ENCODE measurements at regions of chr19 and their contacts with region 1.

Region 1: GRCh38 chr19:8412783-8413628 is at the start of gene MARCHF2:
- DNase-seq: peak; percentile 98
- ATAC-seq: peak; percentile 99 to 100
- total RNA-seq, gene MARCHF2: 81.1 to 87.8 TPM

Region 2: DNA sequence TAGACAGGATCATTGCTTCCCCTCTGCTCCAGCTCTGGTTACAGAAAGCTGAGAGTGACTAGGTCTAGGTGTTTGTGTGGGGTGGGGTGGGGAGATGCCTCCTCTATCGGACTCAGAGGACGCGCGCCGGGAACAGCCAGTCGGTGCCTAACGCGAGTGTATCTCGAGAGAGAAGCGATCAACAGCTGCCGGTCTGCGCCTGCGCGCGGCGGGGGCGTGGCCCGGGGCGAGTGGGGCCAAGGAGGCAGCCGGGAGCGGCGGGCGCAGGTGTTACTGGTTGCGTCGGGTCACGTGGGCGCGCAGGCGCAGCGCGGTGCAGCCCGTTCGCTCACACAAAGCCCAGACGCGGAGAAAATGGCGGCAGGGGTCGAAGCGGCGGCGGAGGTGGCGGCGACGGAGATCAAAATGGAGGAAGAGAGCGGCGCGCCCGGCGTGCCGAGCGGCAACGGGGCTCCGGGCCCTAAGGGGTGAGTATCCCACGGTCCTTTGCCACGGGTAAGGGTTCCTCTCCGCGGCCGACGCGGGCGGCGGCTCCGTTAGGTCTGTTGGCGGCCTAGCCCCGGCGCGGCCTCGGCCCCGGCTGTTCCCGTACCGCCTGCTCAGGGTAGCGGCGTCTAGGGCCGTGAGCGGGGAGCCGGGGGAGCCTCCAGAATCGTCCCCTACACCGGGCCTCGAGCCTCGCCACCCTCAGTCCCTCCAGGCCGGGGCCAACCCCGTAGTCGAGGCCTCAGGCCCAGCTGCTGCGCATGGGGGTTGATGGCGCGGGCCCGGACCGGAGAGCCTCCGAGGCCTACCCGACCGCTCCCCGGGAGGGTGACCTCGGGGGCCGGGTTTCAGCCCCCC is 31.9 kb after region 1 on chr19 and contains the start of gene HNRNPM:
- intact Hi-C with region 1: loop called in 1 of 2 experiments (anchors 5 kb)
- DNase-seq: peak; percentile 100
- ATAC-seq: peak; percentile 98 to 99
- total RNA-seq, gene HNRNPM: 102 to 126 TPM

Region 3: DNA sequence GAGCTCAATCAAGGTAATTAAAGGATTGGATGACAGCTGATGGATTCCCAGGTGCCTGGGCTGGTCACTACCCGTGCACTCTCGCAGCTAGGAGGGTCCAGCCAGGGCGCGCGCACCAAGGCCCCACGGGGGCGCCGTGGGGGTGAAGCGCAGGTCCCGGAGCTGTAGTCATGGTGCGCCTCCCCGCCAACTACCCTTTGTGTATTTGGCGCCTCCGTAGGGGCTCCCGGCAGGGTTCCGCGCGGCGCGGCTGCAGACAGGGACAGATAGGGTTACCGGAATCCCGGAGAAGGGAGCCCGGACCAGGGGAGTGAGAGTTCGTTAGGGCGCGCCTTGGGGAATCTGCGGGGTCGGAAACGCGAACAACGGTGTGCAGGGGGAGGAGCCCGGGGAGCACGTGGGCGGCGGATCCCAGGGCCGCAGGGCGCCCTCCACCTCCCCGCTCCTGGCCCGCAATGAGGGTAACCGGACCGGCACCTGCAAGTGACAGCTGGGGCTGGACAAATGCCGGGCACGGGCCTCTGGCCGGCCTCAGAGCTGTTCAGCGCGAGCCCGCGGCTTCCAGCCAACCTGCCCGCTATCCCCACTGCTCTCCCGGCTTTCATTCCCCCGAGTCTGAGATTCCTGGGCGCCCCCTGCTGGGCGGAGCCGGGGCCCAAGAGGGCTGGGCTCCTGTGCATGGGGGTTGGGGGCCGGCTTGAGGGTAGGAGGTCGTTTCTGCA is 92.8 kb after region 1 on chr19:
- intact Hi-C with region 1: loop called in 1 of 2 experiments (anchors 5 kb)
- DNase-seq: peak; percentile 81
- ATAC-seq: peak; percentile 87 to 91

Measured in left cardiac atrium (tissue), 4 donors.